ENCODE measurements at regions of chr1 and their contacts with region 1.

Region 1: GRCh38 chr1:214328770-214329469 is 48.0 kb downstream of the SMYD2 start:
- DNase-seq: peak; percentile 53
- ATAC-seq: peak; percentile 95
- H3K4me3 Mint-ChIP-seq: no peak overlapping the region
- H3K27ac Mint-ChIP-seq: no peak overlapping the region
- H3K4me1 Mint-ChIP-seq: peaks cover 14% of the 10 kb centered on the region
- H3K27me3 Mint-ChIP-seq: no peaks in the 10 kb centered on the region
- CTCF ChIP-seq: peak; percentile 39

Region 2: DNA sequence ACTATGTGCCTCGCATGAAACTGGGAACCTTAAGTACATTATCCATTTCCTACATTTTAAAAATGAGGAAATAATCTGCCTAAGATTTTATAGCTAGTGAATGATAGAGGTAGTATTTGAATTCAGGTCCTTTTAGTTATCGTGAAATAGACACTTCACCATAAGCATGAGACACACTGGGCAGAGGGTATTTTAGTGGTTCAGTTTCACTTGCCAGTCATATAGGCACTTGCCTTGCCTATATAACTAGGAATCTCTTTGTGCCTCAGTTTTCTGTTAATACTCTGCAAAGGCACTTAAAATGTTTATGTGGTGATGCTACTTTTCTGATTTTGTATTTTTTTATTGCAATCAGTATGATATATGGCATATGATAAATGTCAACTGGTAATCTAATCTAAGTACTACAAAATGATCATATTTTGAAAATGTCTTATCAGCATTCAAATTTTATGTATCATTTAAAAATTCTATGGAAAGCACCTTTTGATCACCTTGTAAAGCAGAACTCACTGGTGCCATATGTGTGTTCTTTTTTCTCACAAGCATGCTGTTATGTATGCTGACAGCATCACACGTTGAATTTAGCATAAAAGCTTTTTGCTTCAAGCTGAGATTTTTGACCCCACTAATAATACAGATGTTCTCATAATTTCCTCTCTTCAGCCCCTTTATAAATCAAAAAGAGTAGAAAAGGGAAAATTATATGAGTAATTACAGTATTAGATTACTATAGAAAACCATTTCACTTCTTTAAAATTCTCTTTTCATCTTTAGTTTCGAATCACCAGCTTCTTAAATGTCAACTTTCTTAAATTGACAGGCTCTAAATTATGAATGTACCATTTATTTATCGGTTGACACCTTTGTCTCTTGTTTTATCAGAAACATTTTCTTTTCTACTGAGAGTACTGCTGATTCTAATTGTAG is 1225.3 kb before region 1 on chr1:
- CTCF ChIA-PET with region 1: no interaction called
- POLR2A ChIA-PET with region 1: no interaction called
- intact Hi-C with region 1: no loop called
- DNase-seq: no peak
- ATAC-seq: peak; percentile 70
- H3K4me3 Mint-ChIP-seq: peak overlapping the region; percentile 21
- H3K27ac Mint-ChIP-seq: peak overlapping the region; percentile 73
- H3K4me1 Mint-ChIP-seq: peaks cover 18% of the 10 kb centered on the region
- H3K27me3 Mint-ChIP-seq: no peaks in the 10 kb centered on the region
- CTCF ChIP-seq: no peak

Region 3: DNA sequence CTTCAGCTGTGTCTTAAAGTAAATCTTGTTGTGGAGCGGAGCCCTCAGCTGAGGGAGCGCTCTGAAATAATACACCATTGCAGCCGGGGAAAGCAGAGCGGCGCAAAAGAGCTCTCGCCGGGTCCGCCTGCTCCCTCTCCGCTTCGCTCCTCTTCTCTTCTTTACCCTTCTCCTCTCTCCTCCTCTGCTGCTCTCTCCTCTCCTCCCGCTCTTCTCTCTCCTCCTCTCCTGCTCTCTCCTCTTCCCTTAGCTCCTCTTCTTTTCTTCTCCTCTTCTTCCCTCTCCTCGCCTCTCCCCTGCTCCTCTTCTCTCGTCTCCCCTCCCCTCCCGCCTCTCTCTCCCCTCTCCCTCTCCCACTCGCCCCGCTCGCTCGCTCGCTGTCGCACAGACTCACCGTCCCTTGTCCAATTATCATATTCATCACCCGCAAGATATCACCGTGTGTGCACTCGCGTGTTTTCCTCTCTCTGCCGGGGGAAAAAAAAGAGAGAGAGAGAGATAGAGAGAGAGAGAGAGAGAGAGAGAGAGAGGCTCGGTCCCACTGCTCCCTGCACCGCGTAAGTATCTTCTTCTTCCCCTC is 340.9 kb before region 1 on chr1 and contains the start of gene PROX1:
- CTCF ChIA-PET with region 1: no interaction called
- POLR2A ChIA-PET with region 1: no interaction called
- intact Hi-C with region 1: loop called (anchors 10 kb)
- DNase-seq: no peak
- ATAC-seq: peak; percentile 79
- H3K4me3 Mint-ChIP-seq: peak within 1 kb of the TSS; percentile 88
- H3K27ac Mint-ChIP-seq: peak within 1 kb of the TSS; percentile 82
- H3K4me1 Mint-ChIP-seq: peaks cover 26% of the 10 kb centered on the region
- H3K27me3 Mint-ChIP-seq: peaks cover 74% of the 10 kb centered on the region
- CTCF ChIP-seq: no peak
- total RNA-seq, gene PROX1: 1.00 and 1.7 TPM in 2 replicates

Region 4: GRCh38 chr1:214261206-214262123 is 67.5 kb before region 1 on chr1:
- CTCF ChIA-PET with region 1: interaction called, 357 read pairs
- POLR2A ChIA-PET with region 1: interaction called, 4 read pairs
- intact Hi-C with region 1: loop called (anchors 1 kb)
- DNase-seq: peak; percentile 63
- ATAC-seq: peak; percentile 93
- H3K4me3 Mint-ChIP-seq: no peak overlapping the region
- H3K27ac Mint-ChIP-seq: no peak overlapping the region
- H3K4me1 Mint-ChIP-seq: no peaks in the 10 kb centered on the region
- H3K27me3 Mint-ChIP-seq: peaks cover 54% of the 10 kb centered on the region
- CTCF ChIP-seq: peak; percentile 96

Region 5: DNA sequence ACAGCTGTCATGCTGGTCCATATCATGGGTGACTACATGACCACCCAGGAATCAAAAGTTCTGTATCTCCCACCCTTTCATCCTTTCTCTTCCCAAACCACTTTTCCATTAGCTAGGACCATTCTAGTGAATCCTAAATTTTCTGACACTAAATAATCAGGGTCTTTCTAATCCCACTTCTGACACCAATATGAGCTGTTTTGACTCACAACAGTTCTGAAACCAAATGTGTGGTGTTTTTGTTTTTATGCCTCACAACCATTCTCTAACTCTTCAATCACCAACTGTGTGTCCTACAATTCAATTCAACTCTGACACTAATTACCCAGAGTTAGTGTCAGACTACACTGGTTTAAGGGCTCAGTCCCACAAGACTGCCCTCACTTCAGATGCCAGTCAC is 16.0 kb after region 1 on chr1:
- CTCF ChIA-PET with region 1: interaction called, 38 read pairs
- POLR2A ChIA-PET with region 1: no interaction called
- intact Hi-C with region 1: no loop called
- DNase-seq: no peak
- ATAC-seq: no peak
- H3K4me3 Mint-ChIP-seq: no peak overlapping the region
- H3K27ac Mint-ChIP-seq: no peak overlapping the region
- H3K4me1 Mint-ChIP-seq: no peaks in the 10 kb centered on the region
- H3K27me3 Mint-ChIP-seq: no peaks in the 10 kb centered on the region
- CTCF ChIP-seq: no peak

Region 6: GRCh38 chr1:214632091-214632490 is 303.2 kb after region 1 on chr1:
- CTCF ChIA-PET with region 1: interaction called, 12 read pairs
- POLR2A ChIA-PET with region 1: no interaction called
- intact Hi-C with region 1: loop called (anchors 1 kb)
- DNase-seq: no peak
- ATAC-seq: no peak
- H3K4me3 Mint-ChIP-seq: no peak overlapping the region
- H3K27ac Mint-ChIP-seq: no peak overlapping the region
- H3K4me1 Mint-ChIP-seq: peaks cover 4% of the 10 kb centered on the region
- H3K27me3 Mint-ChIP-seq: no peaks in the 10 kb centered on the region
- CTCF ChIP-seq: no peak